ENCODE measurements at regions of chr1 and their contacts with region 1.

Region 1: DNA sequence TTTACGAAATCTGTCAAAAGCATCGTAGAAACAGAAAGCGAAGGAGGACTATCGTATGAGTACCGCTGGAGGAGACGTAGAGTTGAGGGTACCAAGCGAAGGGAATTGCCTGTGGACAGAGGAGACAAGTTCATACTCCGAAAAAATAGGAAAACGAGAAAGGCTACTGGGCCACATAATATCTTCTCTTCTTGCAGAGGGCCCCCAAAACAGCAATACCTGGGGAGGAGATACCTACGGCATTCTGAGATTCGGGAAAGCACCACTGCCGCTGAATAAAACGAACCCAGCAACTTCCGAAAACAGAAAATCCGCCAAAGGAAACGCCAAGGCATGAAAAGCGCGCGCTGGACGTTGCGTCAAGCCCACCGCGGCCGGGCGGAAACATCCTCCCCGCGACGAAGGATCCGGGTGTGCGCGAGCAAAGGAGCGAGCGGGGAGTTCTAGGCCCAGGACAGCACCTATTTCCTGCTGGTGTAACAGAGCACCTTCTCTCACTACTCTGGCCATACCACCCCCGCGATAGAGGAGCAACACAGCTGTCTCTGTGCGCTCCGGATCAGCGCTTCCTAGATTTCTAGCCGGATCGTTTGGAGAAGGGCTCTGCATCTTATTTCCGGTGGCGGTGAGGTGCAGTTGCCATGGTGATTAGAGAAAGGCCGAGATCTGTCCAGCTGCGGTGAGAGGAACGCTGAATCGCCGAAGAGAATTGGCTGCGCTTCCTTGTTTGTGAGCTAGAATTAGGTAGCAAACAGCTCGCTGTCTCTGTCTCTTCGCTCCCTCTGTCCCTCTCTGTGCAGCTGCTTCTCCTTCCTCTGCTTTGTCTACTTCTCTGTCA is at the starts of genes EFCAB7 and ITGB3BP:
- DNase-seq: peak; percentile 96
- H3K4me3 ChIP-seq: peak within 1 kb of the TSS; percentile 64 to 81 (median 68)
- H3K27ac ChIP-seq: peak within 1 kb of the TSS; percentile 85 to 94 (median 92)
- H3K4me1 ChIP-seq: peaks cover 15 to 28% (median 24%) of the 10 kb centered on the region in 4 donors
- H3K27me3 ChIP-seq: no peaks in the 10 kb centered on the region
- CTCF ChIP-seq: peak in 1 of 3 experiments; percentile 6
- EP300 ChIP-seq: no peak
- POLR2A ChIP-seq: no peak
- total RNA-seq, gene EFCAB7: 5.1 to 17.9 (median 6.9) TPM
- total RNA-seq, gene ITGB3BP: 6.8 to 38.2 (median 11.1) TPM

Region 2: DNA sequence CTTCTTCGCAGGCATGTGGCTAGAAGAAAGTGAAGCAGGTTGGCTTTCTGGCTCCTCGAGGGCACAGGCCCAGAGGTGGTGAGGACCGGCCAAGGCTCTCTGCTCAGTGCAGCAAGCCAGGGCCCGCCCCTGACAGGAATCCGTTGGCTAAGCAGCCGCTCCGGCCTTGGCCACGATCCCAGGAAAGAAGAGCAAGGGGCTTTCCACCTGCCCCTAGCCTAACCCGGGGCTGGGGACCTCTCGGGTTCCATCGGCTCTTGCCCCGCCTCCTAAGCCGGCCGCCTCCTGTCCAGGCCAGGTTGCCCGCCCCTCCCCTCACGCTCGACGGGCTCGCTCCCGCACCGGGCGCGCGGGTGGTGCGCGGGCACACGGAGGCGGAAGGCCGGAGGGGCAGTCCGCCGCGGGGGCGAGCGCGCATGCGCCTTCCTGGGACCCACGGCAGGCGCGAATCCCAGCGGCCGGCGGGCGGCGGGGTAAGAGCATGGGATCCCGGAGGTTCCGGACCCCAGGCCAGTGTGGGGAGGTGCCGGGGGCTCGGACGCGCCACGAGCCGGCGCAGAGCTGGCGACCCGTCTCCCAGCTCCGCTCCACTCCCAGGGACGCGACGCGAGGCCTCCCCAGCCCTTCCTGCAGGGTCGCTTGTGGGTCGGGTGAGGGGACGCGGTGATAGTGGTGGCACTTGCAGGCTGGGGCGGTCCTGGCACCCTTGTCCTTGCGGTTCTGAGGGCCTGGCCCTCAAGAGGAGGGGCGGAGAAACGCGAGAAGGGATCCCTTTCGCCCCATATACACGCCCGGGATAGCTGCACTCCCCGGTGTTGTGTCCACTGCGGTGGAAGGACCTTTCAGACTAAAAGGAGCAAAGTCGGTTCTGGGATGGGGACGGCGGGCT is 155.7 kb before region 1 on chr1 and contains the start of gene ALG6:
- intact Hi-C with region 1: loop called (anchors 10 kb)
- DNase-seq: peak; percentile 96
- H3K4me3 ChIP-seq: peak within 1 kb of the TSS; percentile 84 to 95 (median 91)
- H3K27ac ChIP-seq: peak within 1 kb of the TSS; percentile 84 to 89 (median 87)
- H3K4me1 ChIP-seq: peaks cover 13 to 19% (median 15%) of the 10 kb centered on the region in 4 donors
- H3K27me3 ChIP-seq: peaks cover 0 to 7% (median 0%) of the 10 kb centered on the region in 4 donors
- CTCF ChIP-seq: peak; percentile 21 to 33 (median 26)
- EP300 ChIP-seq: no peak
- POLR2A ChIP-seq: peak; percentile 53
- total RNA-seq, gene ALG6: 3.6 to 10.7 (median 4.9) TPM

Region 3: GRCh38 chr1:63487336-63488065 is 35.6 kb before region 1 on chr1:
- intact Hi-C with region 1: loop called (anchors 5 kb)
- DNase-seq: no peak
- H3K4me3 ChIP-seq: peak overlapping the region in 1 of 4 donors; percentile 0
- H3K27ac ChIP-seq: peak overlapping the region; percentile 46 to 70 (median 56)
- H3K4me1 ChIP-seq: peaks cover 0 to 44% (median 23%) of the 10 kb centered on the region in 4 donors
- H3K27me3 ChIP-seq: no peaks in the 10 kb centered on the region
- CTCF ChIP-seq: no peak
- EP300 ChIP-seq: peak; percentile 58
- POLR2A ChIP-seq: no peak

Region 4: GRCh38 chr1:63557365-63557987 is 34.4 kb after region 1 on chr1:
- intact Hi-C with region 1: no loop called
- DNase-seq: no peak
- H3K4me3 ChIP-seq: no peak overlapping the region
- H3K27ac ChIP-seq: no peak overlapping the region
- H3K4me1 ChIP-seq: no peaks in the 10 kb centered on the region
- H3K27me3 ChIP-seq: no peaks in the 10 kb centered on the region
- CTCF ChIP-seq: peak; percentile 28 to 52 (median 33)
- EP300 ChIP-seq: no peak
- POLR2A ChIP-seq: no peak

Region 5: GRCh38 chr1:64527165-64527564 is 1004.1 kb after region 1 on chr1:
- intact Hi-C with region 1: no loop called
- DNase-seq: no peak
- H3K4me3 ChIP-seq: no peak overlapping the region
- H3K27ac ChIP-seq: peak overlapping the region in 2 of 4 donors; percentile 28 to 32
- H3K4me1 ChIP-seq: peaks cover 0 to 38% (median 31%) of the 10 kb centered on the region in 4 donors
- H3K27me3 ChIP-seq: no peaks in the 10 kb centered on the region
- CTCF ChIP-seq: no peak
- EP300 ChIP-seq: no peak
- POLR2A ChIP-seq: no peak